Cardiac septum (tissue), 1 donor: ENCODE measurements at regions of chr2 and their contacts with region 1.

Region 1: DNA sequence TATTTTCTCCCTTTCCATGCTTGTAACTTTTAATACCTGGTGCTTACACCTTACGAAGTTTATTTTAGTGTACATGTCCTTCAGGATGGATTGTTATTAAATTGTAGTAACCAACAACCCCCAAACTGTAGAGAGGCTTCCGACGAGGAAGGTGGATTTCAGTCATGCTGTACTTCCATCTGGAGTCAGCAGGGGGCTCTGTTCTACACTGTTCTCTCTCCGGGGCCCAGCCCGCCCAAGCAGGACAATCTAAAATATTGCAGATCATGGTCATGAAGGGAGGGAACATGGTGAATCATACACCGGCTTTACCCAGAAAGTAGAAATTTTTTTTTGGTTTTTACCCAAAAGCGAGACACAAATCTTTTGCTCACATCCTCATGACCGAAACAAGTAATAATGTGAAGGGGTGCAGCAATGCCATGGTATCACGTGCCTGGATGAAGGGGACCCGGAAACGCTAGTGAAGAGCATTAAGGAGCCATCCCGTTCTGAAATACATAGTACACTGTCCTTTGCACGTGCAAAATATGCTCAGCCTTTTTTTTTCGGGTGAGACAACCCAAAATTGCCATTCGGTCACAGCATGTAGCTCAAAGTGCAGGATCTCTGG is 884.8 kb downstream of the EPHA4 start:
- DNase-seq: peak; percentile 77

Region 2: DNA sequence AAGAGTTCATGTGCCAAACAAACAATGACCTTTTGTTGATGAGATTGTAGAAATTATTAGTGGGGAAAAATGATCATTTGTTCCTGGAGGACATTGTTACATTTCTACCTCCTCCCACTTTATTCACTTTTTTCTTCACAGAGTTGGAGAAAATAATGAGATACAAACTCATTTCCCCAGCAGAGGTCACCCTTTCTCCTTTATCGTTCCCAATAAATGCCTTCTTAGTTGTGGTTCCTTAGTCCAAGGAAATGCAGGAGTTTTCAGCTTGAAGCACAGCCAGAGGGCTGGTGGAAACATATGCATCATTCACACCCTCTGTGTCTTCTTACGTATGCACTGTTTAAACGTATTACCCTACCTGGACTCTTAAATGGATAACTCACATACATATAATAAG is 951.1 kb before region 1 on chr2:
- intact Hi-C with region 1: loop called (anchors 10 kb)
- DNase-seq: no peak

Region 3: GRCh38 chr2:220127311-220127710 is 560.0 kb before region 1 on chr2:
- intact Hi-C with region 1: no loop called
- DNase-seq: no peak

Region 4: DNA sequence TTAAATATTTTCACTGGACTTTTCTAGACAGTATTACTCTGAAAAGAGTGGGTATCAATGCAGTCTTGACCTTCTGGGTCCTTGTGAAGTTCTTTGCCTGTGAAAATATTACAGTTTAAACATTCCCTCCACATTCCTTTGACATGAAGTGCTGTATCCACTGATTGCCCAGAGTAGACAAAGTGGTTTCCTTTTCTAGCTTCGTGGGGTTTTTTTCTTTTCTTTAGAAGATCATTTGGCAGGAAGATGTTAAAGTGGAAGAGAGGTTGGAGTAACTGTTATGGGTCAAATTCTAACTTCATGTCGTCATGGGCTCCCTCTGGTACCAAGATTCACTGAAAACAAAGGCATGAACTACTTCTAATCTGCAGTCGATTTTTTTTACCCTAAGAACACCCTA is 387.9 kb after region 1 on chr2:
- intact Hi-C with region 1: loop called (anchors 10 kb)
- DNase-seq: no peak

Region 5: GRCh38 chr2:221104361-221104811 is 417.0 kb after region 1 on chr2:
- intact Hi-C with region 1: loop called (anchors 5 kb)
- DNase-seq: peak; percentile 91

Region 6: GRCh38 chr2:221429741-221430491 is 742.6 kb after region 1 on chr2:
- intact Hi-C with region 1: loop called (anchors 10 kb)
- DNase-seq: no peak